ENCODE measurements at regions of chr17 and their contacts with region 1.

Region 1: DNA sequence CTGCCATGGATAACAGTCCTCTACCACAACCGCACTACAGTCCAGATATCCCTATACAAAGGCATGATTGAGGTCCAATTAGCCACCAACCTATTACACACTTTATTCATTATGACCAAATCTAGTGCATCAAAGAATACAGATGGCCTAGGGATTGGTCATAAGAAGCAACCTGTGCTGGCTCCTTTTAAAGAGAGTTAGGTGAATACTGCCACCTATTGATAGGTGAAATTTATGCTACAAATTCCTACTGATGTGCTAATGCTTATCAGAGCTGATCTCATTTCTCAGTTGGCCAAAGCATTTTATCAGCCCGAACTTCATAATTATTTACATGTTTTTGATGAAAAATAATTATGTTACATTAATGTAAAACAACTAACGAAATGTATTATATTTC is 166.2 kb downstream of the ANKFN1 start:
- DNase-seq: peak; percentile 58
- H3K4me3 ChIP-seq: no peak overlapping the region
- H3K27ac ChIP-seq: no peak overlapping the region
- H3K4me1 ChIP-seq: no peaks in the 10 kb centered on the region
- H3K27me3 ChIP-seq: peaks cover 47% of the 10 kb centered on the region
- CTCF ChIP-seq: peak; percentile 61

Region 2: DNA sequence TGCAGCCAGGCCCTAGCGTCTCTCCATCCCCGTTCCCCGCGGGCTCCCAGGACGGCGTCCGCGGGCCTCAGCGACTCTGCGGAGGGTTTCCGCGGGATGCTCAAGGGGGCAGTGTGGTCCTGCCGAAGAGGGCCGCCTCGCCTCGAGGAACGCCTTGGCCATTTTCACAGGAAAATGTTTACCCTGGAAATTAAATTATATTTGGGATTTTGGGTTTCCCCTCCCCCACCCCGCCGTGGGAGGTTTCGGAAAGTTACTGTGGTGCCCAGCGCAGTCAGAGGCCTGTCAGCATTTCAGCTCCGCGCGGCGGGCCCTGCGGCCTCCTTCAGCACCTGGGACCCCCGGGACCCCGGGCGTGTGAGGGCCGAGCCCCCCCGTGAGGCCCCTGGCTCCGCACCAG is 474.1 kb before region 1 on chr17:
- CTCF ChIA-PET with region 1: no interaction called
- POLR2A ChIA-PET with region 1: no interaction called
- intact Hi-C with region 1: loop called (anchors 10 kb)
- DNase-seq: peak; percentile 71
- H3K4me3 ChIP-seq: no peak overlapping the region
- H3K27ac ChIP-seq: no peak overlapping the region
- H3K4me1 ChIP-seq: no peaks in the 10 kb centered on the region
- H3K27me3 ChIP-seq: peaks cover 51% of the 10 kb centered on the region
- CTCF ChIP-seq: peak; percentile 79

Region 3: DNA sequence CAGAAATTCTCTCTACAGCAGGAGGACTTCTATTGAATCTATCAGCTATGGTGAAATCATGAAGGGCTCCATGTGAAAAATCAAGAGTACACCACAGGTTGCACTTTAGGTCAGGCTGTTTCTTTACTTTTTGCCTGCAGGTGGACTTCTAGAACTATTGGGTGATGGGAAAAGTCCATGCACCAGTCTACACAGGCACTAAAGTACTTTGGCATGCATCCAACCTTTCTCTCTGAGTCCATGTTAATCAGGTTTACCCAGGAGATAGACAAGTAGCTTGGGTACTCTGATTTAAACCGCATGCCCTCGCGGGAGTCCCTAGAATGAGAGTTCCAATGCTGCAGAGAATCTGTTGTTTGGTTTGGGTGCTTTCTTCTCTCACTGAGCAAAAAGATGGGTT is 175.3 kb before region 1 on chr17:
- CTCF ChIA-PET with region 1: no interaction called
- POLR2A ChIA-PET with region 1: no interaction called
- intact Hi-C with region 1: no loop called
- DNase-seq: no peak
- H3K4me3 ChIP-seq: no peak overlapping the region
- H3K27ac ChIP-seq: no peak overlapping the region
- H3K4me1 ChIP-seq: no peaks in the 10 kb centered on the region
- H3K27me3 ChIP-seq: peaks cover 10% of the 10 kb centered on the region
- CTCF ChIP-seq: no peak